ENCODE measurements at regions of chr1 and their contacts with region 1.

Region 1: GRCh38 chr1:229908689-229909088 is 158.3 kb upstream of the GALNT2 start:
- DNase-seq: no peak
- ATAC-seq: no peak
- H3K4me3 ChIP-seq: no peak overlapping the region
- H3K27ac ChIP-seq: no peak overlapping the region
- H3K4me1 ChIP-seq: no peaks in the 10 kb centered on the region
- H3K27me3 ChIP-seq: peaks cover 0 to 3% of the 10 kb centered on the region in 2 experiments; a peak in 2 of 4 replicates
- CTCF ChIP-seq: no peak
- EP300 ChIP-seq: no peak
- POLR2A ChIP-seq: no peak
- RAD21 ChIP-seq: no peak

Region 2: DNA sequence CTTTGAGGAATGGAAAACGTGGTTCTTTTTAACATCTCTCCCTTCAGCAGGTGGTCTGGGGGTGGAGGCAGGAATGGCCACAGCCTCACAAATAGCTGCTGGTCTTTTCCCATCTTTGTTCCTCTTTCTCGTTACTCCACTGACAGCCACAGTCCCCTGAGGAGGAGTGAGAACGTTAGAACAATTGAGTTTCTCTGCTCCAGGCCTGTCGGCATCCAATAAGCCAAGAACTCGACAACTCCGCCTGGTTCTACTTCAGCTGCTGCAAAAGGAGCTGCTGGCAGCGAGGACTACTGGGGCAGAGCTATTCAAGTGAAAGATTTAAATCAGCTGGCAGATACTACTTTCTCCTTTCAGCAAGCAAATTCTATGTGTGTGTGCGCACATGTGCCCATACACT is 11.2 kb before region 1 on chr1:
- CTCF ChIA-PET with region 1: interaction called, 3 read pairs
- POLR2A ChIA-PET with region 1: no interaction called
- RAD21 ChIA-PET with region 1: no interaction called
- SMC1A ChIA-PET with region 1: interaction called, 14 read pairs
- in situ Hi-C with region 1: no loop called
- intact Hi-C with region 1: no loop called
- DNase-seq: no peak
- ATAC-seq: no peak
- H3K4me3 ChIP-seq: no peak overlapping the region
- H3K27ac ChIP-seq: no peak overlapping the region
- H3K4me1 ChIP-seq: no peaks in the 10 kb centered on the region
- H3K27me3 ChIP-seq: peaks cover 0 to 2% of the 10 kb centered on the region in 2 experiments; a peak in 1 of 4 replicates
- CTCF ChIP-seq: no peak
- EP300 ChIP-seq: no peak
- POLR2A ChIP-seq: no peak
- RAD21 ChIP-seq: no peak

Measured in GM12878 (cell line).